Gastrocnemius medialis (tissue), 4 donors: ENCODE measurements at regions of chr4 and their contacts with region 1.

Region 1: DNA sequence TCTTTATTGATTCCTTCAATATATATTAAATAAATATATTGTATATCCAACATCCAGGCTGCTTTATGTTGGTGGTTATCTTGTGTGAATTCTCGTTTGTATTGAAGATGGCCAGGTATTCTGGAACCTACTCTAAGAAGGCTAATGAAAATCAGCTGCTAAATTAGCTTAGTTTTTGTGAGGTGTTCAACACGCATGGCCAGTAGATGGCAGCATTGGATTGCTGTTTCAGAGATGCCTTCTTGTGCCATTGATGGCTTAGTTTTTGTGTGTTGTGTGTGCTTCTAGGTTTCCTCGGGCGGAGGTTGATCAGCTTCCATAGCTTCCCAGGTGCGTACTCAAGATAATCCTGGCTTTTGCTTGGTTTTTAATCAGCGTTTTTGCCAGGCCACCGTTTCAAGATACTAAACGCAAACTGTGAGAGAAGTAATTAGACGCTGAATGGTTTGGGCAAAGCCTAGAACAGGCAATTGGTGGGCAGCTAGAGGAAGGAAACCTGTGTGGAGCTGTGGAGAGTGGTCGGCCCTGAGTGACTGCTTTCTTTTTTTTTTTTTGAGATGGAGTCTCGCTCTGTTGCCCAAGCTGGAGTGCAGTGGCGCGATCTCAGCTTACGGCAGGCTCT is 15.1 kb downstream of the NOCT start:
- DNase-seq: peak; percentile 59 to 75
- ATAC-seq: peak; percentile 45 to 65
- H3K4me3 ChIP-seq: no peak overlapping the region
- H3K27ac ChIP-seq: peak overlapping the region; percentile 88 to 92 (median 90)
- H3K4me1 ChIP-seq: peaks cover 22 to 43% of the 10 kb centered on the region in 2 donors
- H3K27me3 ChIP-seq: no peaks in the 10 kb centered on the region
- CTCF ChIP-seq: peak; percentile 82 to 90 (median 86)
- POLR2A ChIP-seq: no peak

Region 2: GRCh38 chr4:139167774-139168444 is 137.2 kb after region 1 on chr4:
- in situ Hi-C with region 1: loop called in 3 of 4 experiments (anchors 10 to 25 kb)
- intact Hi-C with region 1: loop called (anchors 2 kb)
- DNase-seq: no peak
- ATAC-seq: peak; percentile 88 to 91
- H3K4me3 ChIP-seq: no peak overlapping the region
- H3K27ac ChIP-seq: peak overlapping the region; percentile 39 to 58 (median 53)
- H3K4me1 ChIP-seq: peaks cover 59 to 73% of the 10 kb centered on the region in 2 donors
- H3K27me3 ChIP-seq: no peaks in the 10 kb centered on the region
- CTCF ChIP-seq: peak; percentile 35 to 59 (median 57)
- POLR2A ChIP-seq: no peak

Region 3: GRCh38 chr4:139266583-139267257 is 236.0 kb after region 1 on chr4:
- in situ Hi-C with region 1: no loop called
- intact Hi-C with region 1: no loop called
- DNase-seq: peak; percentile 39 to 73
- ATAC-seq: peak; percentile 84 to 97
- H3K4me3 ChIP-seq: peak overlapping the region; percentile 41 to 54 (median 52)
- H3K27ac ChIP-seq: peak overlapping the region; percentile 58 to 76 (median 63)
- H3K4me1 ChIP-seq: peaks cover 0 to 12% of the 10 kb centered on the region in 2 donors
- H3K27me3 ChIP-seq: no peaks in the 10 kb centered on the region
- CTCF ChIP-seq: no peak
- POLR2A ChIP-seq: no peak

Region 4: DNA sequence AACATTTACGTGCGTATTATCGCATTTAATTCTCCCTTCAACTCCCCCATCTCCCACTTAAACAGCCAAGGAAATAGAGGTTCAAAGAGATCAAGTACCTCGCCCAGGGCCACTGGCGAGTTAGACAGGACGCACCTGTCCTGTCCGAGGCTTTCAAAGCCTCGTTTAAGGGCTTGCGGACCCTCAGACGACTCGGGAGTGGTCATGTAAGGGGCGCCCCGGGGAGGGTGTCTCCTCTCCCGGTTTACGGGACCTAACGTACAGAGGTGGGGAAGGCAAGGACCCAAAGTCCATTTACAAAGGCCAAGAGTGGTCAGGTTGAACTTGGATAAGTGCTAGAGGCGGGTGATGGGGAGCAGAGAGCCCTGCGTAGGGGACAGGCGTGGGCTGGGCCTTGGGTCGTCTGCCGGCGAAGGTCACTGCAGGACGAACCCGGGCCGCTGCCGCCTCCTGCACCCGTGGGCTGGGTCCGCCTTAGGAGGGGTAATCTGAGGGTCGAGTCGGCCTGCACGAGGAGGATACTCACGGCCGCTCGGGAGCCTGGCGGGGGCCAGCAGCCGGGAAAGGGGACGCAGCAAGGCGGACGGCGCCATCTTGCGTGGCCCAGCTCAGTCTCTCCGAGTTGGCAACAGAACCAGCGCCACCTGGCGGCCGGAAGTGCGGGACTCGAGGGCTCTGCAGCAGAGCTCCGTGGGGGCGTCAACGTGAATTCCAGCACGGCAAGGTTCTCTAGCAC is 264.6 kb after region 1 on chr4:
- in situ Hi-C with region 1: loop called (anchors 5 to 10 kb)
- intact Hi-C with region 1: loop called (anchors 1 kb)
- DNase-seq: peak; percentile 93 to 94
- ATAC-seq: peak; percentile 73 to 76
- H3K4me3 ChIP-seq: peak overlapping the region; percentile 71 to 88 (median 75)
- H3K27ac ChIP-seq: peak overlapping the region; percentile 94 to 98 (median 96)
- H3K4me1 ChIP-seq: peaks cover 32 to 37% of the 10 kb centered on the region in 2 donors
- H3K27me3 ChIP-seq: no peaks in the 10 kb centered on the region
- CTCF ChIP-seq: peak; percentile 95 to 98 (median 96)
- POLR2A ChIP-seq: peak; percentile 34 to 36

Region 5: GRCh38 chr4:139509727-139510410 is 479.1 kb after region 1 on chr4:
- in situ Hi-C with region 1: loop called in 1 of 4 experiments (anchors 25 kb)
- intact Hi-C with region 1: no loop called
- DNase-seq: no peak
- ATAC-seq: peak; percentile 36 to 69
- H3K4me3 ChIP-seq: no peak overlapping the region
- H3K27ac ChIP-seq: peak overlapping the region; percentile 63 to 83 (median 74)
- H3K4me1 ChIP-seq: peaks cover 48 to 55% of the 10 kb centered on the region in 2 donors
- H3K27me3 ChIP-seq: no peaks in the 10 kb centered on the region
- CTCF ChIP-seq: peak in 4 of 5 experiments; percentile 28 to 59 (median 42)
- POLR2A ChIP-seq: no peak

Region 6: DNA sequence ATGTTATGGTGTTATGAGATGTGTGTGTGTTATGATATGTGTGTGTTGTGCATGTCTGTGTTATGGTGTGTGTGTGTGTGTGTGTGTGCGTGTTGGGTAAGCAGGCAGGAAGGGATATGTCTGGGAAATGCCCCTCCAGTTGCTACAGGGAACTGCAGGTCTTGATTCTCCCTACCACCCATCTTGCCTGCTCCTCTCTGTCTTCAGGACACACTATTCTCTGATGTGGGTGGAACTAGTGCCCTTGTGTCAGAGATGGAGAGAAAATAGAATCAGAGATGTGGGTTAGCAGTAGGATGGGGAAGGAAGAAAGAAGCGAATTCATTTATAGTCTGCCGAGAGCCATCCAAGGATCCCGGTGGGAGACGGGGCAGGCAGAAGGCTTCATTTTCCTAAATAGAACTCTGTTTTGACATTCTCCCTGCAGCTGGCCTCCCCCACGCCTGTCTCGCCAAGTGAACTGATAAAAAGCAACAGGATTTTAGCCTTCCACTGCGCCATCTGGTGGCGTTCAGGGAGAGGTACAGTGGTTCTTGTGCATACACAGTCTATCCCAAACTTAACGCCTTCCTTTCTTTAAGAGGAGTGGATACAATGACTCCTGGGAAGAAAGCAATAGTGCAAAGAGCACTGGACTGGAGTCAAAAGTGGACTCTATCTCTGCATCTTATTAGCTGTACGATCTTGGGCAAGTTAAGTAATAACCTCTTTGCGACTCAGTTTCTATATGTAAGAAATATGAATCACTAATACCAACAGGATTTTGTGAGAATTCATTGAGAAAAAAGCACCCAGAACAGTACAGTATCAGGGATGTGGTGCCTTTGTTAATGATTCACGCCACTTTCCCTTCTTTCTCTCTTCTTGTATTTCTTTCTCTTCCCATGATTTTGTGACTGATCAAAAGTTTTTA is 620.8 kb after region 1 on chr4:
- in situ Hi-C with region 1: loop called in 3 of 4 experiments (anchors 10 to 25 kb)
- intact Hi-C with region 1: no loop called
- DNase-seq: peak; percentile 44 to 70
- ATAC-seq: peak; percentile 80 to 90
- H3K4me3 ChIP-seq: peak overlapping the region in 1 of 4 donors; percentile 8
- H3K27ac ChIP-seq: no peak overlapping the region
- H3K4me1 ChIP-seq: peaks cover 0 to 1% of the 10 kb centered on the region in 2 donors
- H3K27me3 ChIP-seq: no peaks in the 10 kb centered on the region
- CTCF ChIP-seq: peak; percentile 83 to 89 (median 87)
- POLR2A ChIP-seq: no peak